Activated T-helper 2 cell treated with anti-CD3 and anti-CD28 coated beads, Interferon-gamma antibody, Interleukin-2, Interleukin-4, amounts not matched to agents 10 μg/mL and 5 μg/mL and 100 μg/mL, durations not matched to agents 14 hours and 24 hours and 36 hours (primary cell): ENCODE measurements at regions of chr12 and their contacts with region 1.

Region 1: DNA sequence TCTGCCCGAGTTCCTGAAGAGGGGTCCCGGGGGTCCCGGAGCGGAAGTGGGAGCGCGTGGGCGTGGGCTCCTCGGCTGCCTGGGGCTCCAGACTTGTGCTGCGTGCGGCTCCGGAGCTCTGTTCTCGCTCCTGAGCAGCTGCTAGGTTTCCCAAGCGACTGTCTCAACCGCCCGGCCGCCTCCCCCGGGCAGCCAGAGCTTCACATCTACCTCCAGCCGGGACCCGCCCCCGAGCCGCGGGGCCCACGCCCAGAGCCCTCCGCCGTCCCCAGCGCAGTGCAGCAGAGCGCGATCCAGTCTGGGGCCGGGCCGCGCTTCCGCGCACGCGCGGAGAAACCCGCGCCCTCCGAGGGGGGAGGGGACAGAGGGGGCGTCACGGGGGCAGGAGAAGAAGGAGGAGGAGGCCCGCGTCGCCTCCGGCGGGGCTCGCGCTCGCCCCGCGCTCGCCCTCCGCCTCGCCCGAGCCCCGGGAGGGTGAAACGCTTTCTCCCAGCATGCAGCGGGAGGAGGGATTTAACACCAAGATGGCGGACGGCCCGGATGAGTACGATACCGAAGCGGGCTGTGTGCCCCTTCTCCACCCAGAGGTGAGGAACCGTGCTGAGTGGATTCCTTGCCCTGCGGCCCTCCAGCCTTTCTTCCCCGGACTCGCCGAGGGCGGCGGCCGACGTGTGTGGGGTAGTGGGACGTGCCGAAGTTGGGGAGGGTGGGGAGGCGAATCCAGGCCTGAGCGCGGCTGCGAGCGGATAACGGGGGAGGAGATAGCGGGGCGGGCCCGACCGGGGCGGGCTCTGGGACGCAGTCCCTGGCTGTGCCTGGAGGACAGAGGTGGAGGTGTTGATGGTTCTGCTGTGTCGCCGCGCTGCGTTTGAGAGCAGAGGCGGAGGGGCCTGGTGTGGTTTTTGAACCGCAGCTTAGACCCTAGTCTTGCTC is at the start of gene ZDHHC17:
- DNase-seq: peak; percentile 91
- H3K4me3 Mint-ChIP-seq: peak within 1 kb of the TSS; percentile 98
- H3K27ac Mint-ChIP-seq: peak within 1 kb of the TSS; percentile 94
- H3K4me1 Mint-ChIP-seq: peaks cover 28% of the 10 kb centered on the region
- H3K27me3 Mint-ChIP-seq: peaks cover 12% of the 10 kb centered on the region
- total RNA-seq, gene ZDHHC17: 26.7 and 28.6 TPM in 2 replicates

Region 2: GRCh38 chr12:76810671-76811419 is 46.8 kb after region 1 on chr12:
- intact Hi-C with region 1: no loop called
- DNase-seq: no peak
- H3K4me3 Mint-ChIP-seq: no peak overlapping the region
- H3K27ac Mint-ChIP-seq: no peak overlapping the region
- H3K4me1 Mint-ChIP-seq: no peaks in the 10 kb centered on the region
- H3K27me3 Mint-ChIP-seq: no peaks in the 10 kb centered on the region

Region 3: GRCh38 chr12:76878899-76879709 is 115.1 kb after region 1 on chr12 and contains the start of gene CSRP2:
- intact Hi-C with region 1: loop called (anchors 2 kb)
- DNase-seq: peak; percentile 47
- H3K4me3 Mint-ChIP-seq: peak within 1 kb of the TSS; percentile 89
- H3K27ac Mint-ChIP-seq: no peak within 1 kb of the TSS
- H3K4me1 Mint-ChIP-seq: peaks cover 3% of the 10 kb centered on the region
- H3K27me3 Mint-ChIP-seq: peaks cover 62% of the 10 kb centered on the region
- total RNA-seq, gene CSRP2: 0.84 and 3.5 TPM in 2 replicates

Region 4: DNA sequence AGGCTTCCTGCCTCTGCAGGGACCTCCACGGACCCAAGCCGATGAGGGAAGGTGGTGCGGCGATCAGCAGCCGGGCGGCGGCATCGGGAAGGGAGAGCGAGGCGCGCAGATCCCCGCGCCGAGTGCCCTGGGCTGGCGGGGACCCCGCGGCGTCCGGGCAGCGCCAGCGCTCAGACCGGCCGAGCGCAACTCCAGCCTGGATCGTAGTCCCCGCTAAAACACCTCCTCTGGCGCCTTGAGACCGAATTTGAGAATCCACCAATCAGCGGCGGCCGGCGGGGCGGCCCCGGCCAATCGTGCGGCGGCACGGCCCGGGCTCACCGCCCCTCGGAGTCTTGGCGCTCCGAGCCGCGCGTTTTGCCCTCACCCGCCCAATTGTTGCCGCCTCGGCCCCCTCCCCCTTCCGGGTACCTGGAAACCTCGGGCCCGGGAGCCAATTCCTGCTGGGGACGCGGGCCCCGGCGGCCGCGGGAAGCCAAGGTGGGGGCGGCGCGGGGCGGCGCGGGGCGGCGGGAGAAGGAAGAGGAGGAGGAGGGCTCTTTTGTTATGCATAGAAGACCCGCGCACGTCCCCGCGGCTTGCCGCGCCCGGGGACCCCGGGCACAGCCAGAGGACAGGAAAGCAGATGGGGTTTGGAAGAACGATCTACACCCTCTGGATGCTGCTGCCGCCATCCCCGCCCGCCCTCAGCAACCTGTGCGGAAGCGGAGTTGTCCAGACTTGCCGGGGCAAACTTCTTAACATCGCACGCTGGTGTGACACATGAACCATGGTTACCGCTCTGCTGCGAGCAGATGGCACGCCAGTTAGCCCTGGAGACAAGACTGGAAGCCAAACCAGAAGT is 301.6 kb after region 1 on chr12 and contains the start of gene E2F7:
- intact Hi-C with region 1: loop called (anchors 5 kb)
- DNase-seq: peak; percentile 87
- H3K4me3 Mint-ChIP-seq: peak within 1 kb of the TSS; percentile 88
- H3K27ac Mint-ChIP-seq: peak within 1 kb of the TSS; percentile 58
- H3K4me1 Mint-ChIP-seq: peaks cover 33% of the 10 kb centered on the region
- H3K27me3 Mint-ChIP-seq: peaks cover 8% of the 10 kb centered on the region
- total RNA-seq, gene E2F7: 14.3 and 17.7 TPM in 2 replicates